Endothelial cell of umbilical vein (primary cell): ENCODE measurements at regions of chr16 and their contacts with region 1.

Region 1: GRCh38 chr16:56964243-56965148 is 2.7 kb downstream of the CETP start:
- DNase-seq: peak; percentile 74
- H3K4me3 ChIP-seq: no peak overlapping the region
- H3K27ac ChIP-seq: no peak overlapping the region
- H3K4me1 ChIP-seq: peaks cover 18% of the 10 kb centered on the region
- H3K27me3 ChIP-seq: no peaks in the 10 kb centered on the region
- CTCF ChIP-seq: peak; percentile 96 to 99
- POLR2A ChIP-seq: no peak

Region 2: GRCh38 chr16:56911771-56912571 is 52.5 kb before region 1 on chr16:
- CTCF ChIA-PET with region 1: no interaction called
- POLR2A ChIA-PET with region 1: no interaction called
- dilution Hi-C with region 1: no loop called
- intact Hi-C with region 1: no loop called
- DNase-seq: no peak
- H3K4me3 ChIP-seq: no peak overlapping the region
- H3K27ac ChIP-seq: no peak overlapping the region
- H3K4me1 ChIP-seq: peaks cover 17% of the 10 kb centered on the region
- H3K27me3 ChIP-seq: peaks cover 0 to 3% of the 10 kb centered on the region in 2 experiments
- CTCF ChIP-seq: no peak
- POLR2A ChIP-seq: no peak

Region 3: DNA sequence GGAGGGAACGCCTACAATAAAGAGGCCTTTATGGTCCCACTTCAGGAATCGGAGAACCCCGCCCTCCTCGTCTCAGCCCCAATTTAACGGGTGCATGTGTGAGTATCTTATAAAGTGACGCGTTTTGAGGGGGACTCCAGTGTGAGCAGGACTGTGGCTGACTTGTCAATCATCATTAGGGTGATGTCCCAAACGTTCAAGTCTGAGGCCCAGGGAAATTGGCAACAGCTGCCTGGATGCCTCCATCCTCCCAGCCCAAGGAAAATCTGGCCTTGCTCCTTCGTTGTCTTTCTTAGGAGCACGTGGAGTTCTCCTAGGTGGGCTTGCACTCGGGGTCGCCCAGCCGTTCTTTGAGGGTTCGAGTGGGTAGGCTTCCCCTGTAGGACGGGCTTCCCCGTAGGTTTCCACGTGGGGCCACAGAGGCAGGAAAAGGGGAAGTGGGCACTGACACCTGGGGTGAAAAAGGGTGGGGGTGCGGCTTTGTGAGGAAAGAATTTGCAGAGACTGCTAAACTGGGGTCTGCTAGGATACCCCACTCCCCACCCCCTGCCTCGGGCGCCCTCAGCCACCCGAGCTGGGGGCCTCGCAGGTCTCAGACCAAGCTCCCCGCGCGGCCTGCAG is 33.1 kb before region 1 on chr16:
- CTCF ChIA-PET with region 1: no interaction called
- POLR2A ChIA-PET with region 1: no interaction called
- dilution Hi-C with region 1: no loop called
- intact Hi-C with region 1: no loop called
- DNase-seq: no peak
- H3K4me3 ChIP-seq: peak overlapping the region in 2 of 3 experiments; percentile 27 to 30
- H3K27ac ChIP-seq: peak overlapping the region; percentile 62
- H3K4me1 ChIP-seq: peaks cover 26% of the 10 kb centered on the region
- H3K27me3 ChIP-seq: no peaks in the 10 kb centered on the region
- CTCF ChIP-seq: no peak
- POLR2A ChIP-seq: no peak

Region 4: DNA sequence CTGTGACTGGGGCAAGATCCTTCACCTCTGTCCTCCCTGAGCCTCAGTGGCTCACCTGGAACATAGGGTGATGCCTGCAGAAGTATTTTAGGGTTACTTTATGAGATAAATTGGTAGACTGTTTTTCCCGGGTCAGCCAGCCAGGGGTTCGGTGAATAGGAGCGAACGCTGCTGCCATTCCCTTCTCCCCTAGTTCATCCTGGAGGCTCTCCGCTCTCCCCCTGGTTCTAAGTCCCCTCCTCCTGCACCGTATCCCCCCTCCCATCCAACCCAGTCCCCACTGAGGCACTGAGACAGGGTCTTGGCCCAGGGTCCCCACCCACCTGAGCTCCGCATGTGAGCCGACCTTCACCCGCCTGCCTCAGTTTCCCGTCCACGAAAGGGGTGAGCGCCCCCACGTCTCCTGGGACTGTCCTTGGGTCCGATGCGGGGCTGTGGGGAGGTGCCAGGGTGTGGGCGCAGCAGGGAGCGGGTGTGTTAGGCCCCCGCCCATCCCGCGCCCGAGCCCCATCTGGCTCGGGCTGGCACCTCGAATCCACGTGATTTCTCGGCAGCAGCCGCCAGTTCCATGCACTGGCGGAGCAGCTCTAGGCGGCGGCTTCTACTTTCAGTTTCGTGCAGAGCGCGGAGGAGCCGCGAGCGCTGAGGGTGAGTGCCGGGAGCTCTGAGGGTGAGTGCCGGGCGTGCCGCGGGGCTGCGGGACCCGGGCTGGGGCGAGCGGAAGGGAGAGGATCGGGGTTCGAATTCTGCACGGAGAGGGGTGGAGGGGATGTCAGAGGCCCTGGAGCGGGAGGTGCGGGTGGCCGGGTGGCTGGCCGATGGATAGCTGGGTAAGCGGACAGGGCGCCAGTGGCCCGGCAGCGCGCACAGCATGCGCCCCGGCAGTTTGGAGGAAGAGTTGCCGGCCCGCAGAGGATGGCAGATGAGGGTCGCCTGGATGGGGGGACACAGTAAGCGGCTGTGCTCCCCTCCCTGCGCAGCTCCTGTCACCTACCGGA is 24.8 kb after region 1 on chr16 and contains the start of gene NLRC5:
- CTCF ChIA-PET with region 1: interaction called, 27 read pairs
- POLR2A ChIA-PET with region 1: no interaction called
- dilution Hi-C with region 1: no loop called
- intact Hi-C with region 1: no loop called
- DNase-seq: peak; percentile 82
- H3K4me3 ChIP-seq: peak within 1 kb of the TSS; percentile 80 to 96 (median 86)
- H3K27ac ChIP-seq: peak within 1 kb of the TSS; percentile 58
- H3K4me1 ChIP-seq: peaks cover 17% of the 10 kb centered on the region
- H3K27me3 ChIP-seq: no peaks in the 10 kb centered on the region
- CTCF ChIP-seq: no peak
- POLR2A ChIP-seq: peak; percentile 44
- total RNA-seq, gene NLRC5: 20.1 and 26.3 TPM in 2 replicates

Region 5: DNA sequence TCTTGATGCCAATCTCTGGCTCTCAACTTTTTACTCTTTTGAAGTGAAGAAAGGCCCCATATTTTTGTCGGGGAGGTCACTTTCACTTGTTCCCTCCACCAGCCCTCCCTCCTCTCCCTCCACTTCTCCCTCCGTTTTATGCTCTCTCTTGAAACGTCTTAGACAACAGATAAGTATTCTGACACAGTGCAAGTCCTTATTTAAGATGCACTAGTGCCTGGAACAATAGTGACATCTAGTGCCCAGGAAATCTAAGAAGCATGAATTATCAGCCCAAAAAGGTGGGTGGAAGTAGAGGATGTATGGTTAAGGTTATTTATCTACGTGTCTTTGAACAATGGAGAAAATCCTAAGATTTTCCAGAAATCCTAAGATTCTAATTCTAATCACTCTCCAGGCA is 203.5 kb after region 1 on chr16:
- CTCF ChIA-PET with region 1: interaction called, 13 read pairs
- POLR2A ChIA-PET with region 1: no interaction called
- dilution Hi-C with region 1: no loop called
- intact Hi-C with region 1: loop called (anchors 1 kb)
- DNase-seq: peak; percentile 83
- H3K4me3 ChIP-seq: no peak overlapping the region
- H3K27ac ChIP-seq: no peak overlapping the region
- H3K4me1 ChIP-seq: no peaks in the 10 kb centered on the region
- H3K27me3 ChIP-seq: no peaks in the 10 kb centered on the region
- CTCF ChIP-seq: peak; percentile 50 to 51
- POLR2A ChIP-seq: no peak